WTC11 (cell line): ENCODE measurements at regions of chr18 and their contacts with region 1.

Region 1: GRCh38 chr18:46369323-46369722 is 265.1 kb downstream of the HAUS1 start:
- DNase-seq: peak; percentile 36
- ATAC-seq: peak; percentile 89
- H3K4me3 Mint-ChIP-seq: no peak overlapping the region
- H3K27ac Mint-ChIP-seq: no peak overlapping the region
- H3K4me1 Mint-ChIP-seq: peaks cover 9% of the 10 kb centered on the region
- H3K27me3 Mint-ChIP-seq: no peaks in the 10 kb centered on the region; the same call in 1 of the 2 replicates
- CTCF ChIP-seq: no peak

Region 2: DNA sequence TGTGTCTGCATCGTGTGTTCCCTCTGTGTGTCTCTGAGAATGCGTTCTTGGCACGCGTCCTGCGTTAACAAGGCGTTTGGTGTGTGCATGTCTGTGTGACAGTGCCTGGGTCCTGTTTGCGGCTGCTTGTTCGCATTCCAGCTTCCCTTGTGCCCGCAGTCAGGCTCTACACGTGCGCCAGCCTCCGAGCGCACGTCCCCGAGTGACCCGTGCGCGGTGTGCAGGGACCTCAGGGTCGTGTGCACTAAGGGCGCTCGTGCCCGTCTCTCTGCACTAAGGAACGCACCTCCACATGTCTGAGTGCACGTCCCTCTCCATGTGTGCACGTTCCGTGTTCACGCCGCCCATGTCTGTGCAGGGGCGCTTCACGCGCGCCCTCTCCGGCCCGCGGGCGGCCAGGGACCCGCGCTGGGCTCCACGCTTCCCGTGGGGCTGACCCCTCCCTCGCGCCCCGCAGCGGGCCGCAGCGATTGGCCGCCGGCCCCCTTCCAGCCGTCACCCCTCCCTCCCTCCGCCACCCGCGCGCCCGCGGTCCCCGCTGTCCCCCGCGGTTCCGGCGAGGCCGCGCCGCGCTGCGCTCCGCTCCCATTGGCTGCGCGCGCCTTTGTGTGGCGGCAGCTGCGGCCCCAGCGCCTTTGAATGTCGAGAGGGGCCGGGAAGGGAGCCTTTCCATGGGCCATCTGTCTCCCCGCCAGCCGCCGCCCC is 35.7 kb before region 1 on chr18:
- CTCF ChIA-PET with region 1: interaction called, 10 read pairs
- POLR2A ChIA-PET with region 1: no interaction called
- DNase-seq: peak; percentile 50
- ATAC-seq: peak; percentile 21
- H3K4me3 Mint-ChIP-seq: peak overlapping the region; percentile 72
- H3K27ac Mint-ChIP-seq: no peak overlapping the region
- H3K4me1 Mint-ChIP-seq: peaks cover 43% of the 10 kb centered on the region
- H3K27me3 Mint-ChIP-seq: peaks cover 23% of the 10 kb centered on the region
- CTCF ChIP-seq: no peak